GM12878 (cell line): ENCODE measurements at regions of chr13 and their contacts with region 1.

Region 1: DNA sequence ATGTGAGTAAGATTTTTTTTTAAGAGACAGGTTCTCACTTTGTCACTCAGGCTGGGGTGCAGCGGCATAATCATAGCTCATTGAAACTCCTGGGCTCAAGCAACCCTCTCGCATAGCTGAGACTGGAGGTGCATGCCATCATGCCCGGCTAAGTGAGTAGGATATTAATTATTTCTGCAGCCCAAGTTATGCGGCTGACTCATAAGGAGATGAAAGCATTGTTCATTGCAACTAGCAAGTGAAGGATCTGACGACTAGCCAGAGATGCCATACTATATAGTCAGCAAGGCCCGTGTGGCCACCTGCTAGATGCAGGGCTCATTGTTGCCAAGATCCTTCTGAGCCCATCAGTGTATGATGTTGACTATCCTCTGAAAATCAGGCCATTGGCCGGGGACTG is 45.2 kb downstream of the ABCC4 start:
- DNase-seq: no peak
- ATAC-seq: no peak
- H3K4me3 ChIP-seq: no peak overlapping the region
- H3K27ac ChIP-seq: 0 out of 2 replicates have a peak overlapping the region, but pooled peaks have one; percentile 22
- H3K4me1 ChIP-seq: peaks cover 64% of the 10 kb centered on the region
- H3K27me3 ChIP-seq: no peaks in the 10 kb centered on the region
- CTCF ChIP-seq: no peak
- EP300 ChIP-seq: no peak
- POLR2A ChIP-seq: no peak
- RAD21 ChIP-seq: no peak

Region 2: GRCh38 chr13:94968040-94968756 is 287.9 kb before region 1 on chr13:
- CTCF ChIA-PET with region 1: no interaction called
- POLR2A ChIA-PET with region 1: no interaction called
- RAD21 ChIA-PET with region 1: no interaction called
- SMC1A ChIA-PET with region 1: no interaction called
- in situ Hi-C with region 1: no loop called
- intact Hi-C with region 1: no loop called
- DNase-seq: no peak
- ATAC-seq: peak; percentile 19; the same call in 2 of the 3 replicates
- H3K4me3 ChIP-seq: no peak overlapping the region
- H3K27ac ChIP-seq: no peak overlapping the region
- H3K4me1 ChIP-seq: no peaks in the 10 kb centered on the region
- H3K27me3 ChIP-seq: peaks cover 0 to 14% of the 10 kb centered on the region in 2 experiments; a peak in 2 of 4 replicates
- CTCF ChIP-seq: no peak
- EP300 ChIP-seq: no peak
- POLR2A ChIP-seq: no peak
- RAD21 ChIP-seq: no peak

Region 3: DNA sequence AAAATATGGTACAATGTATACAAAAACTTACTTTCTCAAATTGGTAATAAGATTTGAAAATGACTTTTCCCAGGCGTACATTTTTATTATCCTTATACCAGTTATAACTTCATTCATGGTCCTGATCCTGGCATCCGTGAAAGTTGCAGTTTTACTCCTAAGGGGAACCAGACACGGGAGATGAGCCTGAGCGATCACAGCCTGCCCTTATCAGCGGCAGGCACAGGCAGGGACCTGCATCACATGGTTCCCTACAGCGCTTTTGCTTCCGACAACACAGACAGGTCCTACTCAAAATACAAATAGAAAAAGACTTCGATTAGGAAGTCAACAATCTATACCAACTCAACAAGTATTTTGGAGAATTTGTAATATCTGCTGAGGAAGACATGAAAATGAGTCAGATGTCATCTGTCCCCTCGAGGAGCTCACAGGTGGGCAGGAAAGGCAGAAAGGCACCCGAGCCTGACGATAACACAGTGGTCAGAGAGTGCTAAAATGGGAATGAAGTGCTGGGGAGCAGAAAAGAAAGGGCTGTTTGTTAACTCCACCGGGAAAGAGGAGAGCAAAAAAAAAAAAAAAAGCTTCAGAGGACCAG is 48.2 kb before region 1 on chr13:
- CTCF ChIA-PET with region 1: interaction called, 5 read pairs
- POLR2A ChIA-PET with region 1: interaction called, 3 read pairs
- RAD21 ChIA-PET with region 1: interaction called, 7 read pairs
- SMC1A ChIA-PET with region 1: interaction called, 20 read pairs
- in situ Hi-C with region 1: no loop called
- intact Hi-C with region 1: no loop called
- DNase-seq: no peak
- ATAC-seq: peak; percentile 95
- H3K4me3 ChIP-seq: peak overlapping the region; percentile 58; the same call in 1 of the 2 replicates
- H3K27ac ChIP-seq: peak overlapping the region; percentile 59
- H3K4me1 ChIP-seq: peaks cover 8% of the 10 kb centered on the region
- H3K27me3 ChIP-seq: no peaks in the 10 kb centered on the region
- CTCF ChIP-seq: no peak
- EP300 ChIP-seq: no peak
- POLR2A ChIP-seq: no peak
- RAD21 ChIP-seq: no peak

Region 4: DNA sequence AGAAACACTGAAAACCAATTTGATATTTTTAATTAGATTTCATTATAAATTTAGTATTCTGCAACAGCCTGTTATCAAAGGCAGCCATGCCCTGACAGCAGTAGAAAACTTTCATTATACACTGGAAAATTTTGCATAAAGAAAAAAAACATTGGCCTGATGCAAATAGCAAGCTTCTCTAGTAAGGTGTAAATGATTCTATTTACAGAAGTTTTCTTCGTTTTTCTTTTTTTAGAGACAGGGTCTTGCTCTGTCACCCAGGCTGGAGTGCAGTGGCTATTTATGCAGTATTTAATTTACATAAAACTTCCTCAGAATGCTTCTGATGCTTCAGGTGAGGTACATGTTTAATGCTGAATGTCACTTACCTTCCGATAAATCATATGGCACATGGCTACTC is 21.8 kb before region 1 on chr13:
- CTCF ChIA-PET with region 1: interaction called, 14 read pairs
- POLR2A ChIA-PET with region 1: interaction called, 5 read pairs
- RAD21 ChIA-PET with region 1: interaction called, 23 read pairs
- SMC1A ChIA-PET with region 1: interaction called, 109 read pairs
- in situ Hi-C with region 1: no loop called
- intact Hi-C with region 1: no loop called
- DNase-seq: no peak
- ATAC-seq: peak; percentile 68
- H3K4me3 ChIP-seq: peak overlapping the region; percentile 43; the same call in 1 of the 2 replicates
- H3K27ac ChIP-seq: peak overlapping the region; percentile 49; the same call in 1 of the 2 replicates
- H3K4me1 ChIP-seq: peaks cover 29% of the 10 kb centered on the region
- H3K27me3 ChIP-seq: no peaks in the 10 kb centered on the region
- CTCF ChIP-seq: no peak
- EP300 ChIP-seq: no peak; a peak in 1 of 4 replicates
- POLR2A ChIP-seq: no peak
- RAD21 ChIP-seq: no peak

Region 5: GRCh38 chr13:95269756-95270155 is 13.7 kb after region 1 on chr13:
- CTCF ChIA-PET with region 1: interaction called, 3 read pairs
- POLR2A ChIA-PET with region 1: interaction called, 11 read pairs
- RAD21 ChIA-PET with region 1: interaction called, 5 read pairs
- SMC1A ChIA-PET with region 1: interaction called, 8 read pairs
- in situ Hi-C with region 1: no loop called
- intact Hi-C with region 1: no loop called
- DNase-seq: no peak
- ATAC-seq: no peak
- H3K4me3 ChIP-seq: no peak overlapping the region
- H3K27ac ChIP-seq: peak overlapping the region; percentile 15; the same call in 1 of the 2 replicates
- H3K4me1 ChIP-seq: peaks cover 10% of the 10 kb centered on the region
- H3K27me3 ChIP-seq: no peaks in the 10 kb centered on the region
- CTCF ChIP-seq: no peak
- EP300 ChIP-seq: no peak
- POLR2A ChIP-seq: no peak
- RAD21 ChIP-seq: no peak

Region 6: DNA sequence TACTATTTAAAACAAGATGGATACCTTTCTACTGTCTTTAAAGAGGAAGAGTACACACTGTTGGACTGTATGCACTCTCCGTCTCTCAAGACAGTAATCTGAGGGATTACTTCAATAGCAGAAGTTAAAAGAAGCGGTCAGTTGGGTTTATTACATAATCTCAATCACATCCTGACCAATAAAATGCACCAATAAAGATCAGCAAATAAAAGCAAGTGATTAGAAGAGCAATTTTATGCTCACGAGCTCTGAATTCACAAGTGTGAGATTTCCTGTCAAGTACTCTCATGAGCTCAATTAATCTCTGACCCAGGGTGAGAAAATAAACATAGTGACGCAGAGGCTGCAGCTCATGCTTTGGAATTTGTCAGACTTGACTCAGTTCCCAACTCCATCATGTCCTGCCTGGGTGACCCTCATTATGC is 32.9 kb after region 1 on chr13:
- CTCF ChIA-PET with region 1: interaction called, 4 read pairs
- POLR2A ChIA-PET with region 1: interaction called, 3 read pairs
- RAD21 ChIA-PET with region 1: interaction called, 7 read pairs
- SMC1A ChIA-PET with region 1: interaction called, 10 read pairs
- in situ Hi-C with region 1: no loop called
- intact Hi-C with region 1: no loop called
- DNase-seq: no peak
- ATAC-seq: no peak
- H3K4me3 ChIP-seq: no peak overlapping the region
- H3K27ac ChIP-seq: no peak overlapping the region
- H3K4me1 ChIP-seq: peaks cover 17% of the 10 kb centered on the region
- H3K27me3 ChIP-seq: no peaks in the 10 kb centered on the region
- CTCF ChIP-seq: no peak
- EP300 ChIP-seq: no peak
- POLR2A ChIP-seq: no peak
- RAD21 ChIP-seq: no peak